ENCODE measurements at regions of chr5 and their contacts with region 1.

Region 1: DNA sequence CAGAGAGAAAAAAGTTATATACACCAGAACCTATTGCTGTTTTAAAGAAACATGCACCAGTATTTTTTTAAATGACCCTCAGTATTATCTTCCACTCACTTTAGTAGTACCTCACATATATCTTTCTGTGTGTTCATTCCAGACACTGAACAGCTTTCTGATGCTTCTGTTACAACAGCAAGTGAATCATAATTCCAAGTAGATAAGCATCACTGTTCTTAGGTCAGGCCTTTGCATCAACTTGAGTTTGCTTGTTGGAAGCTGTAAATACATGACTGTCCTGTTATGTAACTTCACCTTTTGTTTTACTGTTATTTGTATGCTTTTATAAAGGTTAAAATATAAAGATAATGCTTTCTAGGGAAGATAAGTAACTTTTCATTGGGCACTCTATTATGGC is 184.4 kb downstream of the ISL1 start:
- DNase-seq: no peak
- H3K4me3 Mint-ChIP-seq: no peak overlapping the region
- H3K27ac Mint-ChIP-seq: no peak overlapping the region
- H3K4me1 Mint-ChIP-seq: peaks cover 5% of the 10 kb centered on the region
- H3K27me3 Mint-ChIP-seq: no peaks in the 10 kb centered on the region
- CTCF ChIP-seq: no peak

Region 2: DNA sequence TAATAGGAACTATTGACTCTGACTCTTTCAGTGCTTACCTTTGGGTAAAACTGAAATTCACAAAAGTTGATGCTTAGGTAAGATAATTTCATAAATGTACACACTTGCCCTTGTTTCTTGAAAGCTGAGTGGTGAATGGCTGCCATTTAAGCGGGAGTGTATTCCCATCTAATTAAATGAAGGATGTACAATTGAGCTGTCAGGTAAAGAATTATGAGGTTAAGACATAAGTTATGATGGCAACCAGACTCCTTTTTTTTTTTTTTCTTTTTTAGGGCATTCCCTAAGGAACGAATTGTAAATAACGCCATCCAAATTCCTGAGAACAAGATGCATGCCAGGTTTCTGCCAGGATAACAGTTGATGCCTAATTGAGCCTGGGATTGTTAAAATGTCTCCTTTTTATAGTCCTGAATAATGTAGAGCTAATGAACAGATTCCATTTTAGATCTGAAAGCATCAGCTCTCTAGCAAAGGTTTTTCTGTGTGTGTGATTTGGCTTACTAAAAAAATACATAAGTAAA is 15.3 kb after region 1 on chr5:
- CTCF ChIA-PET with region 1: interaction called, 10 read pairs
- POLR2A ChIA-PET with region 1: no interaction called
- intact Hi-C with region 1: no loop called
- DNase-seq: no peak
- H3K4me3 Mint-ChIP-seq: no peak overlapping the region
- H3K27ac Mint-ChIP-seq: no peak overlapping the region
- H3K4me1 Mint-ChIP-seq: no peaks in the 10 kb centered on the region
- H3K27me3 Mint-ChIP-seq: peaks cover 33% of the 10 kb centered on the region
- CTCF ChIP-seq: no peak